CD4-positive, alpha-beta T cell (primary cell): ENCODE measurements at regions of chr13 and their contacts with region 1.

Region 1: DNA sequence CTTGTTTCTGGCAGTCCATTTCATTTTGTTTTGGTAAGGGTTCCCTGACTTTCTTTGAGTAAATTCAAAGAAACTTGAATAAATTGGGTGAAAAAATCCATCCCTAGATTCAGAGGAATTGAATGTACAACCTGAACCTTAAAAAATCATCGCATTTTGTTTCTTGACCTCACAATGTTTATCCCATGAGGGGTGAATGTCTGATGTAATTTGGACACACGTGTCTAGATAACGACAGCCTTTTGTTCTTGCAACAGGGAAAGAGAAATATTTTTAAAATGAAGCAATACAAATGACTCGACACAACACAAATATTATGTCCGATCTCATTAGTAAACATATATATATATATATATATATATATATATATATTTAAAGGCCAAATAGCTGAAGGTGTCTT is 453.2 kb upstream of the ATXN8OS start:
- DNase-seq: no peak
- ATAC-seq: no peak
- H3K4me3 ChIP-seq: no peak overlapping the region
- H3K4me3 Mint-ChIP-seq: no peak overlapping the region
- H3K27ac ChIP-seq: no peak overlapping the region
- H3K27ac Mint-ChIP-seq: no peak overlapping the region
- H3K4me1 ChIP-seq: no peaks in the 10 kb centered on the region
- H3K4me1 Mint-ChIP-seq: no peaks in the 10 kb centered on the region
- H3K27me3 ChIP-seq: no peaks in the 10 kb centered on the region
- H3K27me3 Mint-ChIP-seq: no peaks in the 10 kb centered on the region
- CTCF ChIP-seq: no peak

Region 2: DNA sequence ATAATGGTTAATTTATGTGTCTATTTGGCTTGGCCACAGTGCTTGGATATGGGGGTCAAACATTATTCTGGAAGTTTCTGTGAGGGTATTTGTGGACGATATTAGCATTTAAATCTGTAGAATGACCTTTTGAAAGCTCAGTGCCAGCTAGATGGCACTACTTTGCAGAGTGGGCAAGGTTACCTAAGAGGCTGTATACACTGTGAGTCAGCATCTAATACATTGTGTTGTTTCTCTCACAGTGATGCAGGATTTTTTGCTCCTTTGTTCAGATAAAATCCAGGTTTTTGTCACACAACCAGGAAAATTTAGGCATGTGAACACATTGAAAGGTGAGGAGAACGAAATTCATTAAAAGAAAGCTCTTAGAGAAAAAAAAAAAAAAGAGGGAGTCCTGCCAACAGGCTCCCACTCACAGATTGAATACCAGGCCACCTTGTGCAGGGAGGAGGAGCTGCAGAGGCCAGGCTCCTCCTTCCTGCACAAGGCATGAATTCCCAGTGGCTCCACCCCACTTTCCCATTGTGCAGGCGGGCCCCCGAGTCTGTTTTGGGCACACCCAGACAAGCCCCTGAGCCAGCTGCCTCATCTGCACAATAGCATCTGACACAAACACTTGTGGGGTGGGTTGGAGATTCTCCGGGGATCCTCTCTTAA is 97.7 kb before region 1 on chr13:
- CTCF ChIA-PET with region 1: no interaction called
- POLR2A ChIA-PET with region 1: no interaction called
- intact Hi-C with region 1: no loop called
- DNase-seq: no peak
- ATAC-seq: no peak
- H3K4me3 ChIP-seq: no peak overlapping the region
- H3K4me3 Mint-ChIP-seq: no peak overlapping the region
- H3K27ac ChIP-seq: no peak overlapping the region
- H3K27ac Mint-ChIP-seq: no peak overlapping the region
- H3K4me1 ChIP-seq: no peaks in the 10 kb centered on the region
- H3K4me1 Mint-ChIP-seq: no peaks in the 10 kb centered on the region
- H3K27me3 ChIP-seq: no peaks in the 10 kb centered on the region
- H3K27me3 Mint-ChIP-seq: no peaks in the 10 kb centered on the region
- CTCF ChIP-seq: no peak

Region 3: GRCh38 chr13:69641773-69642172 is 12.6 kb before region 1 on chr13:
- CTCF ChIA-PET with region 1: no interaction called
- POLR2A ChIA-PET with region 1: no interaction called
- intact Hi-C with region 1: loop called in 1 of 2 experiments (anchors 1 kb)
- DNase-seq: no peak
- ATAC-seq: no peak
- H3K4me3 ChIP-seq: no peak overlapping the region
- H3K4me3 Mint-ChIP-seq: no peak overlapping the region
- H3K27ac ChIP-seq: no peak overlapping the region
- H3K27ac Mint-ChIP-seq: no peak overlapping the region
- H3K4me1 ChIP-seq: no peaks in the 10 kb centered on the region
- H3K4me1 Mint-ChIP-seq: no peaks in the 10 kb centered on the region
- H3K27me3 ChIP-seq: no peaks in the 10 kb centered on the region
- H3K27me3 Mint-ChIP-seq: no peaks in the 10 kb centered on the region
- CTCF ChIP-seq: no peak

Region 4: DNA sequence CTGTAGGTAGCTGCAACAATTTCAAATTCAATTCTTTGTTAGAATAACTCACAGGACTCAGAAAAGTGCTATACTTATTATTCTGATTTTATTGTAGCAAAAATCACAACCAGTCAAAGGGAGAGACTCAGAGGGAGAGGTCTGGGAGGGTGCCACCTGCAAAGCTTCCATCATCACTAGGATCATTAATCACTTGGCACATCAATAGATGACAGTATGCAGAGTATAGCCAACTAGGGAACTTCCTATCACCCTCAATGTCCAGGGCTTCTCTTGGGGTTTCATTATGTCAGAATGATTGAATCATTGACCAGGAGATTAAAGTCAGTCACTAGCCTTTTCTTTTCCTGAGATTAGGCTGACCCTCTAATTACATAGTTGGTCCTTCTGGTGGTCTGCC is 21.9 kb after region 1 on chr13:
- CTCF ChIA-PET with region 1: no interaction called
- POLR2A ChIA-PET with region 1: no interaction called
- intact Hi-C with region 1: no loop called
- DNase-seq: no peak
- ATAC-seq: no peak
- H3K4me3 ChIP-seq: no peak overlapping the region
- H3K4me3 Mint-ChIP-seq: no peak overlapping the region
- H3K27ac ChIP-seq: no peak overlapping the region
- H3K27ac Mint-ChIP-seq: no peak overlapping the region
- H3K4me1 ChIP-seq: no peaks in the 10 kb centered on the region
- H3K4me1 Mint-ChIP-seq: no peaks in the 10 kb centered on the region
- H3K27me3 ChIP-seq: no peaks in the 10 kb centered on the region
- H3K27me3 Mint-ChIP-seq: no peaks in the 10 kb centered on the region
- CTCF ChIP-seq: no peak